ENCODE measurements at regions of chr12 and their contacts with region 1.

Region 1: GRCh38 chr12:124767066-124767821 is 96.4 kb downstream of the SCARB1 start:
- DNase-seq: peak; percentile 86
- ATAC-seq: peak; percentile 78 to 82

Region 2: GRCh38 chr12:124036674-124037109 is 730.6 kb before region 1 on chr12:
- intact Hi-C with region 1: loop called (anchors 1 to 5 kb)
- DNase-seq: peak; percentile 43
- ATAC-seq: peak; percentile 38 to 56

Region 3: GRCh38 chr12:124359671-124360581 is 407.3 kb before region 1 on chr12:
- intact Hi-C with region 1: loop called in 1 of 2 experiments (anchors 10 kb)
- DNase-seq: peak; percentile 88
- ATAC-seq: peak; percentile 76 to 92

Region 4: DNA sequence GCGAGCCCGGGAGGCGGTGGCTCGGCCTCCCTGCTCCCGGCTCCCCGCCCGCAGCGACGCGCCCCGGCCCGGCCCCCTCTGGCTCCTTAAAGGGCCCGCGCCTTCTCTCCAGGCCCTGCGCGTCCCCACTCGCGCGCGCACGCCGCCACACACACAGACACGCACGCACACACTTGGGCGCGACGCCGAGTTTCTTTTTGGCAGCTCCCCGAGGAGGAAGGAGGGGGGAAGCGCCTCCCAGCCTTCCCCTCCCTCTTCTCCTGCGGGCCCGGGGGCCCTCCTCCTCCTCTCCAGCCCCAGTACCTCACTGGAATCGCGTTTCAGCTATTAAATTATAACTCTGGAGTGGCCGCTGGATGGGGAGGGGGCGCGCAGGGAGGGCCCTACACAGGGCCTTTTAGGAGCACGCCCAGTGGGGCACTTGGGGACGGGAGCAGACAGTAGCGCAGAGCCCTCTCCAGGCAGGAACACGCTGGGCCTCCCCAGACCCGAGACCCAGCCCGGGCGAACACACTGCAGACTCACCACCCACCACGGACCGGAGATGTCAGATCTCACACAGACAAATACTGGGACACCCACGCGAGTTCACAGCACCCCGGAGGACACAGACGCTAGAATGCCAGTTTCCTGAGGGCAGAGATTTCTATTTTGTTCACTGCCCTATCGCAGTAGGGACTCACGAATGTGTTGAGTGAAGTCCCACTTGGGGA is 199.4 kb before region 1 on chr12:
- intact Hi-C with region 1: loop called (anchors 5 to 10 kb)
- DNase-seq: peak; percentile 96
- ATAC-seq: peak; percentile 82 to 88

Region 5: DNA sequence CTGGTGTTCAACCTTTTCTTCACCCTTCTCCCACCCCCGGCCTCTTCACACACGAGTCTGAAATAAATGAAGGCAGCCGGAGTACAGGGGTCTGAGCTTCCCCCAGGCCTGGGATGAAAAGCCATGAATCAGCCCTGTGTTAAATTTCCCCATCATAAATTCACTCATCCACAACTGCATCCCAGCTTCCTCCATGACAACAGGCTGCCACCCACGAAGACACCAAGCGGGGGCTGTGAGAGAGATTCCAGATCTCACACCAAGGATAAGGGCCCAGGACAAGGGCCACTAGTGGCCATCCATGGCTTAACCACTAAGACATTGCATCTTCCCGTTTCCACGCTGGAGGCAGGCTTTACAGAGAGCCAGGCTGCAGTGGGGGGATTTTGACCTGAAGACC is 105.9 kb before region 1 on chr12:
- intact Hi-C with region 1: no loop called
- DNase-seq: no peak
- ATAC-seq: no peak

Region 6: GRCh38 chr12:124680863-124681778 is 86.1 kb before region 1 on chr12:
- intact Hi-C with region 1: loop called in 1 of 2 experiments (anchors 5 kb)
- DNase-seq: peak; percentile 83
- ATAC-seq: peak; percentile 71 to 75

Measured in left cardiac atrium (tissue), 4 donors.